ENCODE measurements at regions of chr4 and their contacts with region 1.

Region 1: GRCh38 chr4:107989537-107990386 is at the start of gene HADH:
- DNase-seq: peak; percentile 92 to 98 (median 96)
- ATAC-seq: peak; percentile 100
- H3K4me3 ChIP-seq: peak within 1 kb of the TSS; percentile 57
- H3K4me3 Mint-ChIP-seq: peak within 1 kb of the TSS; percentile 86 to 99 (median 95)
- H3K27ac ChIP-seq: peak within 1 kb of the TSS; percentile 87
- H3K27ac Mint-ChIP-seq: peak within 1 kb of the TSS; percentile 79 to 98 (median 95)
- H3K4me1 ChIP-seq: peaks cover 8 to 37% of the 10 kb centered on the region in 2 donors
- H3K4me1 Mint-ChIP-seq: peaks cover 28 to 85% (median 71%) of the 10 kb centered on the region in 7 donors
- H3K27me3 ChIP-seq: no peaks in the 10 kb centered on the region
- H3K27me3 Mint-ChIP-seq: no peaks in the 10 kb centered on the region
- total RNA-seq, gene HADH: 16.5 to 38.8 (median 29.7) TPM

Region 2: DNA sequence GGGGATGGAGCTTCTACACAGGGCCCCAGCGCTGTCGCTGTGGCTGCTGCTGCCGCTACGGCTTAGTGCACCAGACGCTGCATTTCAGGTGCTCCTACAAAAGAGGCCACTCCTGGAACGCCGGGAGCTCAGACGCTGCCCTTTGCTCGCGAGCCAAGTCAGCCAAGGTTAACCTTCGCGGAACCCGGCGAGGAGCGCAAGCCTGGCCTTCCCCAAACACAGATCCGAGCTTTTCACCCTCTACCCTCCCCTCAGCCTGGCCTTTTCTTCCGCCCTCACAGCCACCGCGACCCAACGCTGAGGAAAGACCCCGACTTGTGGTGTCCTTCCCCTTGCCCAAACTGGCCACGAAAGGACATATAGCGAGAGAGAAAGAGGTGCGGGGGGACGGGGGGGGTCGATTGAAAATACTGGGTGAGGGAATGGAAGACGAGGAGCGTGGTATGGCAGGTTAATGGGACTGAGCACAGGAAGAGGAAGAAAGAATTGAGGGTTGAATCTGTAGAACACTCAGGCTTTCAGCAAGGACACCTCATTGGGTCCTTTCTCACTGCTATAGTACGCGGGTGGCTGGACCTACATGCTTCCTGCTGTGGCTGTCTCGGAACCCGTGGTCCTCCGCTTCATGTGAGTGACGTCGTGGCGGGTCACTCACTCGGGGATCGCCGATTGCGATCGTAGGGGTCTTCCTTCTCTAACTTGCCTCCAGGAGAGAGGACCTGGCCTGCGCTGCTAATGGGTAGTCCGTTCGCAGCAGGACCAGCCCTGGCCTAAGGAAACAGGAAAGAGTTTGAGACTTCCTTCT is 1673.6 kb before region 1 on chr4 and contains the starts of genes AIMP1 and TBCK:
- CTCF ChIA-PET with region 1: no interaction called
- POLR2A ChIA-PET with region 1: interaction called, 3 read pairs
- intact Hi-C with region 1: loop called (anchors 5 to 10 kb)
- DNase-seq: peak; percentile 74 to 92 (median 88)
- ATAC-seq: peak; percentile 93
- H3K4me3 ChIP-seq: peak within 1 kb of the TSS; percentile 95
- H3K4me3 Mint-ChIP-seq: no peak within 1 kb of the TSS
- H3K27ac ChIP-seq: peak within 1 kb of the TSS; percentile 90
- H3K27ac Mint-ChIP-seq: no peak within 1 kb of the TSS
- H3K4me1 ChIP-seq: peaks cover 22 to 24% of the 10 kb centered on the region in 2 donors
- H3K4me1 Mint-ChIP-seq: peaks cover 23 to 50% (median 43%) of the 10 kb centered on the region in 7 donors
- H3K27me3 ChIP-seq: no peaks in the 10 kb centered on the region
- H3K27me3 Mint-ChIP-seq: no peaks in the 10 kb centered on the region
- total RNA-seq, gene AIMP1: 44.2 to 59.2 (median 56.8) TPM
- total RNA-seq, gene TBCK: 41.3 to 70.7 (median 60.7) TPM

Region 3: DNA sequence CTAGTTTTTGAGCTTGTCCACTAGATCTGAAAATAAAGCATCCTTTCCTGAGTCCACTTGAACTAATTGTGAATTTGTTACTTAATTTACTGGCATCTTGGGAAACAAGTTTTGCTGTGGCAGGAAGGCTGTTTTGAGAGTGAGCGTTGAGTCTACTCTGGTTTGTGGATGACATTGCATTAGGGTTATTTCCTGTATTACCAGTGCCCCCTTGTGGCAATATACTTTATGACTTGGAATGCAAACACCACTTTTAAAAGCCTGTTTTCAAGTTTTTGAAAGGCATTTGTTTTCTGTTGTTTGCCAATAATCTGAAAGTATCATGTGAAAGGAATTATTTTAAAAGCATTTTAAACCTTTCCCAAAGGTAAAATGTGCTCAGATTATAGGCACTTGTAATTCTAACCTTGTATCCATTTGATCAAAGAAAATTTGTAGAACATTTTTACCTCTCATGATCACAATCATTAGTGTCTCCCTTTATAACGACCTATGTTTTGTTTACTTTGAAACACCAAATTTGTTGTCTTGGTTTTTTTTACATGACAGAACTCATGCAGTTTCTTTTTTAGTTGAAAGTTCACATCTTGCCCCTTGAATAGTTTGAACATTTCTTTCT is 76.4 kb before region 1 on chr4:
- CTCF ChIA-PET with region 1: no interaction called
- POLR2A ChIA-PET with region 1: no interaction called
- intact Hi-C with region 1: loop called in 1 of 2 experiments (anchors 1 kb)
- DNase-seq: peak in 7 of 9 donors; percentile 36 to 69 (median 63)
- ATAC-seq: peak; percentile 95
- H3K4me3 ChIP-seq: no peak overlapping the region
- H3K4me3 Mint-ChIP-seq: no peak overlapping the region
- H3K27ac ChIP-seq: no peak overlapping the region
- H3K27ac Mint-ChIP-seq: peak overlapping the region in 1 of 9 donors; percentile 38
- H3K4me1 ChIP-seq: no peaks in the 10 kb centered on the region
- H3K4me1 Mint-ChIP-seq: peaks cover 0 to 5% (median 0%) of the 10 kb centered on the region in 7 donors
- H3K27me3 ChIP-seq: no peaks in the 10 kb centered on the region
- H3K27me3 Mint-ChIP-seq: peaks cover 0 to 9% (median 1%) of the 10 kb centered on the region in 5 donors

Region 4: GRCh38 chr4:107930821-107931774 is 58.7 kb before region 1 on chr4 and contains the start of gene CYP2U1:
- CTCF ChIA-PET with region 1: no interaction called
- POLR2A ChIA-PET with region 1: interaction called, 5 read pairs
- intact Hi-C with region 1: loop called (anchors 1 kb)
- DNase-seq: peak; percentile 74 to 84 (median 81)
- ATAC-seq: peak; percentile 96
- H3K4me3 ChIP-seq: peak within 1 kb of the TSS; percentile 86
- H3K4me3 Mint-ChIP-seq: peak within 1 kb of the TSS; percentile 90 to 98 (median 92)
- H3K27ac ChIP-seq: peak within 1 kb of the TSS; percentile 71
- H3K27ac Mint-ChIP-seq: peak within 1 kb of the TSS; percentile 65 to 98 (median 88)
- H3K4me1 ChIP-seq: peaks cover 8 to 12% of the 10 kb centered on the region in 2 donors
- H3K4me1 Mint-ChIP-seq: peaks cover 21 to 50% (median 35%) of the 10 kb centered on the region in 7 donors
- H3K27me3 ChIP-seq: no peaks in the 10 kb centered on the region
- H3K27me3 Mint-ChIP-seq: peaks cover 0 to 17% (median 0%) of the 10 kb centered on the region in 5 donors
- total RNA-seq, gene CYP2U1: 3.8 to 11.4 (median 5.8) TPM

Region 5: DNA sequence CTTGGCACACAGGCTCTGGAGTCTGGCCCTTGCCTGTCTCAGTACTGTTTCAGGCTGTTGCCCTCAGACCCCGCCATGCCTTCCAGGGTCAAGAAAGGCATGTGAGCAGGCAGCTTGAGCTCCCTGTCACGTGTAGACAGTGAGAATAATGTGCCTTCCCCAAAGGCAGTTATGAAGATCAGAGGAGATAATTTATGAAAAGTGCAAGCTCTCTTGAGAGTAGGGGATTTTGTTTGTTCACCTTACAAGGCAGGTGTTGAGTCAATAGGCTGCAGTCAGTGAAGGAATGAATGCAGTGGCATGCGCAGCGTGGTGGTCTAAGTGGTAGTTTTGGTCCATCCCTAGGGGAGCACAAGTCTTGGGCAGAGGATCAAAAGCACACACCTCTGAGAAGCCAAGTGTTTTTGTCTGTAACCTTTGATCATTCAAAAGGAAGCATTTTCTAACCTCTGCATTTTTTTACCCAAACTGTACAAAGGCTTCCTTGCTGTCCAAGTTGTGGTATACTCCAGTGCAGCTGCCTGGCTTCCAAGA is 14.3 kb after region 1 on chr4:
- CTCF ChIA-PET with region 1: no interaction called
- POLR2A ChIA-PET with region 1: interaction called, 11 read pairs
- intact Hi-C with region 1: loop called in 1 of 2 experiments (anchors 1 kb)
- DNase-seq: peak in 6 of 9 donors; percentile 20 to 46 (median 34)
- ATAC-seq: peak; percentile 63
- H3K4me3 ChIP-seq: no peak overlapping the region
- H3K4me3 Mint-ChIP-seq: peak overlapping the region in 8 of 10 donors; percentile 11 to 74 (median 48)
- H3K27ac ChIP-seq: peak overlapping the region; percentile 31
- H3K27ac Mint-ChIP-seq: peak overlapping the region in 8 of 9 donors; percentile 28 to 90 (median 78)
- H3K4me1 ChIP-seq: peaks cover 0 to 27% of the 10 kb centered on the region in 2 donors
- H3K4me1 Mint-ChIP-seq: peaks cover 17 to 85% (median 63%) of the 10 kb centered on the region in 7 donors
- H3K27me3 ChIP-seq: no peaks in the 10 kb centered on the region
- H3K27me3 Mint-ChIP-seq: no peaks in the 10 kb centered on the region

Region 6: DNA sequence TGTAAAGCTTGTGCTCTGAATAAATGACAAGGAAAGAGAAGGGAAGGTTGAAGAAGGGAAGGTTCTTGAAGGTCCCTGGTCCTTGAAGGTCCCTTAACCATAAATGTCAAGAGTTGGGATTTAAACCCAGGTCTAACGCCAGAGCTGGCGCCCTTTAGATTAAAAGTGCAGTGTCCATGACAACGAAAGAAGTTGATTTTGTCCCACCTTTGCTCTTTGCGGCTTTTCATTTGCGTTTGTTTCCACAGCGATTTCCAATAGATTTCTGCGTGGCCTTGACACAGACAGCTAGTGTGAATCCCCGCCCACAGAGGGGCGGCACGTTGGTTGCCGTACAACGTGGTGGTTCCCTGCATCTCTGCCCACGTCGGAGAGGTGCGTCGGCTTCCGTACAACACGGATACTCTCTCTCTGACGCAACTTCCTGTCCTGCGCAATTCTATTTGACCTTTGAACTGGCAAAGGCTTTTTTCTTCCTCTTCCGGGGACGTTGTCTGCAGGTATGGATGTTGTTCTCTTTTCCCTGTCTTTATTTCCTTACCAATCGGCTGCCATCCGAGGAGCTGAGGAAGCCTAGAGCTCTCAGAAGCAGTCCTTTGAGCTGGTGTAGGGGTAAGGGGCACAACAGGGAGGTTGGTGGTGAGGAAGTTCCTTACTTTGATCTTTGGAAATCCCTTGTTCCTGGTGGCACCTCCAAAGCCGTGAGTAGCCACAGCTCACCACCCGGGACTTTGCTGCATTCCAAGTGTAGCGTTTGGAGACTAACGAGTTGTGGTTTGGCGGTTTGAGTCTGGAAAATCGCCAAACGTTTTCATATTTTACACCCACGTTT is 630.6 kb after region 1 on chr4 and contains the start of gene RPL34:
- CTCF ChIA-PET with region 1: no interaction called
- POLR2A ChIA-PET with region 1: interaction called, 7 read pairs
- intact Hi-C with region 1: loop called (anchors 1 kb)
- DNase-seq: peak; percentile 85 to 99 (median 96)
- ATAC-seq: peak; percentile 100
- H3K4me3 ChIP-seq: peak within 1 kb of the TSS; percentile 98
- H3K4me3 Mint-ChIP-seq: peak within 1 kb of the TSS; percentile 87 to 99 (median 96)
- H3K27ac ChIP-seq: peak within 1 kb of the TSS; percentile 90
- H3K27ac Mint-ChIP-seq: peak within 1 kb of the TSS; percentile 95 to 99 (median 97)
- H3K4me1 ChIP-seq: peaks cover 29 to 30% of the 10 kb centered on the region in 2 donors
- H3K4me1 Mint-ChIP-seq: peaks cover 33 to 81% (median 66%) of the 10 kb centered on the region in 7 donors
- H3K27me3 ChIP-seq: no peaks in the 10 kb centered on the region
- H3K27me3 Mint-ChIP-seq: peaks cover 0 to 3% (median 0%) of the 10 kb centered on the region in 5 donors
- total RNA-seq, gene RPL34: 1,411 to 3,442 (median 3,215) TPM

Region 7: DNA sequence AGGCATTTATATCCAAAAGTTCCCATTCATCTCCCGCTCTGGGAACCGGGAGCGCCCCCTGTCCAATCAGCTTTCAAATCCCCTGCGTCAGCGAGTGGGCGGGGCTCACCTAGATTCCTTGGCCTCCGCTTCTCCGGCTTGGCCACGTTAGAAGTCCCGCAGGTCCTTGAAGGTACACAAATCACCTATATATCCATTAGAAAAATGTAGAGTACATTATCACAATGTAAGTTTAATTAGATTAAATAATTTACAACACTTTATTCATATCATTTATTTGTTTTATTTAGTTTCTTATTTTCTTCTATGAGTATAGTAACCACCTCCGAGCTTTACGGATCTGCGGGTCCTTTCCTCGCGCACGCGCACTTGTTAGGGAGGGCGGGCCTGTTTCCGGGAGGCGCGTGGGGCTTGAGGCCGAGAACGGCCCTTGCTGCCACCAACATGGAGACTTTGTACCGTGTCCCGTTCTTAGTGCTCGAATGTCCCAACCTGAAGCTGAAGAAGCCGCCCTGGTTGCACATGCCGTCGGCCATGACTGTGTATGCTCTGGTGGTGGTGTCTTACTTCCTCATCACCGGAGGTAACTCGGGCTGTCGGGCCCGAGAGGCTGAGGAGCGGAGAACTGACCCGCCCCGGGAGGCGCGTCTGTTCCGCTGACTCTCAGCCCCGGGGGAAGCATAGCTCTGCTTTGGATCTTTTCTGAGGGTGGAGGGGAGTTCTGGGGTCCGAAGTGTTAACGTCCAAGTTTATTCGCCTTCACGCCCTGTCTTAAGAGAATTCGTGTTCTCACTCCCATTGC is 660.7 kb after region 1 on chr4 and contains the start of gene OSTC:
- CTCF ChIA-PET with region 1: no interaction called
- POLR2A ChIA-PET with region 1: no interaction called
- intact Hi-C with region 1: loop called (anchors 1 kb)
- DNase-seq: peak; percentile 88 to 95 (median 91)
- ATAC-seq: peak; percentile 94
- H3K4me3 ChIP-seq: peak within 1 kb of the TSS; percentile 98
- H3K4me3 Mint-ChIP-seq: peak within 1 kb of the TSS; percentile 90 to 99 (median 94)
- H3K27ac ChIP-seq: peak within 1 kb of the TSS; percentile 96
- H3K27ac Mint-ChIP-seq: peak within 1 kb of the TSS; percentile 89 to 99 (median 98)
- H3K4me1 ChIP-seq: peaks cover 8 to 13% of the 10 kb centered on the region in 2 donors
- H3K4me1 Mint-ChIP-seq: peaks cover 22 to 49% (median 41%) of the 10 kb centered on the region in 7 donors
- H3K27me3 ChIP-seq: no peaks in the 10 kb centered on the region
- H3K27me3 Mint-ChIP-seq: no peaks in the 10 kb centered on the region
- total RNA-seq, gene OSTC: 31.8 to 98.2 (median 55.6) TPM

Measured in naive thymus-derived CD4-positive, alpha-beta T cell (primary cell).